ENCODE measurements at regions of chr3 and their contacts with region 1.

Region 1: DNA sequence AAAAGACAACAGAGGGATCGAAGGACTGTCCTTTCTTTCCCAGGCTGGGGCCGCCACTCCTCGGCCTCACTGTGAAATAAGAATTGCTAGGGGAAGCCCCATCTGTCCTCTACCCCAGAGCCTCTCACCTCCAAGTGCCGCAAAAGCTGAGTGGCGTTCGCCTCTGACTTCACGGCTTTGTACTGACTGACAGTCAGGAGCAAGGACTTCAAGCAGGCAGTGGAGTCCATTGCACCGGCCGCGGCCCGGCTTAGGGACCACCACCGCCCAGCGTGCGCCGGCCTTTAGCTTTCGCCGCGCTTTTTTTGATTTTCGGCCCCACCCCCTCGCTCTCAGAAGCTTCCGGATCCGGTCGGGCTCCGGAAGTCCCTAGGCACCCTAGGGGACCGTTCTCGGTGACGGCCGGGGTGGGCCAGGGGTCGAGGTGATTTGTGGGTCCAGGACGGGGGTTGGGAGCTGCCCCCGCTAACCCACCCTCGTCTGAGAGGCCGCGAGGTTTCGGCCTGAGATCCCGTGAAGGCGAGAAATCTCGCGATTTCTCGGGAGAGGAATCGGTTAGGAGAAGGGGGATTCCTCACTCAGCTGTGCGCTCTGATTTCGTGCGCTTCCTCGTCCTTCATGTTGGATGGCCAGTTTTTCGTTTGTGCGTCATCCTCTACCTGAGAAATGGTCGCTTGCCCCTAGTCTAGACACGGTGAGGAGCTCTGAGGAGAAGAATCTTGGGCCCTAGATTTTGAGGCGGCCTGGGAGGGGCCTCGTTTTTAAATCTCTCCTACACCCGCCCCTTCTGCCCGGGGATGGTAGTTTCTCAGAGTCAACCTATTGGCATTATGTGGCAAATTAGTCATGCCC is at the starts of genes CIP2A and DZIP3:
- DNase-seq: peak; percentile 81
- H3K4me3 Mint-ChIP-seq: peak within 1 kb of the TSS; percentile 98
- H3K27ac Mint-ChIP-seq: peak within 1 kb of the TSS; percentile 98
- H3K4me1 Mint-ChIP-seq: peaks cover 54% of the 10 kb centered on the region
- H3K27me3 Mint-ChIP-seq: no peaks in the 10 kb centered on the region
- total RNA-seq, gene CIP2A: 57.5 to 62.4 TPM
- total RNA-seq, gene DZIP3: 13.0 to 13.8 TPM

Region 2: GRCh38 chr3:108602249-108602934 is 13.0 kb after region 1 on chr3:
- CTCF ChIA-PET with region 1: interaction called, 12 read pairs
- POLR2A ChIA-PET with region 1: interaction called, 7 read pairs
- DNase-seq: peak; percentile 61
- H3K4me3 Mint-ChIP-seq: peak overlapping the region; percentile 51
- H3K27ac Mint-ChIP-seq: peak overlapping the region; percentile 85
- H3K4me1 Mint-ChIP-seq: peaks cover 58% of the 10 kb centered on the region
- H3K27me3 Mint-ChIP-seq: no peaks in the 10 kb centered on the region

Region 3: GRCh38 chr3:108645364-108645763 is 56.0 kb after region 1 on chr3:
- CTCF ChIA-PET with region 1: no interaction called
- POLR2A ChIA-PET with region 1: no interaction called
- DNase-seq: no peak
- H3K4me3 Mint-ChIP-seq: no peak overlapping the region
- H3K27ac Mint-ChIP-seq: no peak overlapping the region
- H3K4me1 Mint-ChIP-seq: no peaks in the 10 kb centered on the region
- H3K27me3 Mint-ChIP-seq: no peaks in the 10 kb centered on the region

Measured in activated CD4-positive, alpha-beta T cell treated with anti-CD3 and anti-CD28 coated beads, Interleukin-2, amount 10 ng/mL, durations not matched to agents 7 days and 5 days (primary cell).